Activated naive CD4-positive, alpha-beta T cell treated with anti-CD3 and anti-CD28 coated beads, Interleukin-2, amount 10 ng/mL, durations not matched to agents 7 days and 5 days (primary cell): ENCODE measurements at regions of chr9 and their contacts with region 1.

Region 1: DNA sequence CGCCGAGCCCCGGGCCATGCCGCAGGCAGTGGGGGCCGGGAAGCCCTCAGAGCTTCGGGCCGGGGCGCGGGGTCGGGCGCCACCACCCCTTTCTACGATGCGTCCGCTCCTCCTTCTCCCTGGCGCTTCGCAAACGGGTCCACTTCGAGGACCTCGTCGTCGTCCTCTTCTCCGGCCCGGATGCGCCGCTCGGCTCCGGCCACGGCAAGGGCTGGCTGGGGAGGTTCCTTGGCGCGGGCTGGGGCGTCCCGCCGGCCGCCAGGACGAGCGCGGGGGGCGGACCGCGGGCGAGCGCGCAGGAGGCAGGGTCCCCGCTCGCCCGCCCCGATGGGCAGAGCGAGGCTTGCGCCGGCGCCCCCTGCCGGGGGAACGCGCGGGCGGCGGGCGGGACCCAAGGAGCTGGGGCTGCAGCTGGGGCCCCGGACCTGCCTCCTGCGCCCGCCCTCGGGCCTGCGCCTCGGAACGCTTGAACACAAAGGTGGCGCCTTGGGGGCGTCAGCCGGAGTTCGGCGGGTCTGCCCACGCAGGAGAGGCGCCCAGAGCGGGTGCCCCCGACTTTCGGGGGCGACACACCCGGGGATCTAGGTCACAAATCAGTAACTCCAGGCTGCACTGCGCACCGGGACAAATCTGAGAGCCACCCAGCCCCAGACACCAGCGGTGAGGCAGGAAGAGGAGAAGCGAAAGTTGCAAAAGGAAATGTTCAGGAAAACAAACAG is at the start of gene ROR2:
- DNase-seq: peak; percentile 61
- H3K4me3 Mint-ChIP-seq: peak within 1 kb of the TSS; percentile 61
- H3K27ac Mint-ChIP-seq: no peak within 1 kb of the TSS
- H3K4me1 Mint-ChIP-seq: peaks cover 6% of the 10 kb centered on the region
- H3K27me3 Mint-ChIP-seq: peaks cover 94% of the 10 kb centered on the region

Region 2: GRCh38 chr9:91775011-91775707 is 174.9 kb before region 1 on chr9:
- CTCF ChIA-PET with region 1: interaction called, 13 read pairs
- DNase-seq: peak; percentile 77
- H3K4me3 Mint-ChIP-seq: no peak overlapping the region
- H3K27ac Mint-ChIP-seq: no peak overlapping the region
- H3K4me1 Mint-ChIP-seq: no peaks in the 10 kb centered on the region
- H3K27me3 Mint-ChIP-seq: peaks cover 19% of the 10 kb centered on the region

Region 3: DNA sequence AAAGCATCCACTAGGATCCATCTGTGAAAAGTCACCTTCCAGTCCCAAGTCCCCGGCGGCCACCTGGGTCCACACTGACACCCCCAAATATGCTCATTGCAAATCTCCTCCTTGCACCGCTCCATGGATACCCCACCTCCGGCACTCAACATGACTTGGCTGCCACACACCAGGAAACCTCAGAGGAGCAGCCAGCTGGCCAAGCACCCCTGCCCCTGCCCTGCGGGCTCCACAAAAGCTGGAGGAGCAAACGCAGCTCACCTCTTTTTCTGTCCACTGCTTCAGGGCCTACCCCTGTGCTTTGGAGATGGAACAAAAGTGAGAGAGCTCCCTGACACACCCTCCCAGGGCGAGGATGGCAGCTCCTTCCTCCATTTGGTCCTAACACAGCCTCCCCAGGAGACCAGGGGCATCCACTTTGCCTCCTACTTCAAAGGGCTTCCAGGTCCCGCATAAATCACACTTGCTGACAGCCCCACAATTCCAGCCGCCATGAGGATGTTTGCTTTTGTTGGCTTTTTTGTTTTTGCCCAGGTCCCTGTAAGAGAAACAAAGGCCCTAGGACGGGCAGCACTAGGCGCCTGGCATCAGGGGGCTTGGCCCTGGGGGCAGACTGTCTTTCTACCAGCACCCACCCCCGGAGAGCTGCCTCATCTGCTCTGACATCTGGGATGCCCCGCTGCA is 14.9 kb before region 1 on chr9:
- CTCF ChIA-PET with region 1: interaction called, 12 read pairs
- DNase-seq: no peak
- H3K4me3 Mint-ChIP-seq: no peak overlapping the region
- H3K27ac Mint-ChIP-seq: no peak overlapping the region
- H3K4me1 Mint-ChIP-seq: peaks cover 5% of the 10 kb centered on the region
- H3K27me3 Mint-ChIP-seq: peaks cover 15% of the 10 kb centered on the region

Region 4: GRCh38 chr9:91963711-91964240 is 13.7 kb after region 1 on chr9:
- CTCF ChIA-PET with region 1: interaction called, 13 read pairs
- DNase-seq: no peak
- H3K4me3 Mint-ChIP-seq: no peak overlapping the region
- H3K27ac Mint-ChIP-seq: no peak overlapping the region
- H3K4me1 Mint-ChIP-seq: no peaks in the 10 kb centered on the region
- H3K27me3 Mint-ChIP-seq: peaks cover 15% of the 10 kb centered on the region

Region 5: GRCh38 chr9:92029553-92029952 is 79.4 kb after region 1 on chr9:
- CTCF ChIA-PET with region 1: no interaction called
- DNase-seq: no peak
- H3K4me3 Mint-ChIP-seq: no peak overlapping the region
- H3K27ac Mint-ChIP-seq: no peak overlapping the region
- H3K4me1 Mint-ChIP-seq: no peaks in the 10 kb centered on the region
- H3K27me3 Mint-ChIP-seq: no peaks in the 10 kb centered on the region

Region 6: DNA sequence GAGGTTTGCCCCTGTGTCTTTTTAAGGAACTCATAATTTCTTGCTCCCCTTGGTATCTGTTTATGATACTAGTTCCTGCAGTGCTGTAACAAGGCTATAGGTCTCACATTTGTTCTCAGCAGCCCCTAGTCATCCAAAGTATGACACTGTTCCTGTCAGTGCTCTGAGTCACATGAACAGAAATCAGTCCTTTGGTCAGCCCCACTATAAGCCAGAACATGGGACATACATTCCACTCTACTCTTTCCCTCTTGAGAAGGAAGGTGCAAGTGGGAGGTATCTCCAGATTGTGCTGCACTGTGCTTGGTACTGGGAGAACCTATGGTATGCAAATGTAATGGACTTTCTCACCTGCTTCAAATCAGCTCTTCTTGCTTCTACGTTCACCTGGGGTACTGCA is 256.4 kb after region 1 on chr9:
- CTCF ChIA-PET with region 1: no interaction called
- DNase-seq: no peak
- H3K4me3 Mint-ChIP-seq: no peak overlapping the region
- H3K27ac Mint-ChIP-seq: no peak overlapping the region
- H3K4me1 Mint-ChIP-seq: no peaks in the 10 kb centered on the region
- H3K27me3 Mint-ChIP-seq: no peaks in the 10 kb centered on the region